ACHN (cell line): ENCODE measurements at regions of chr1 and their contacts with region 1.

Region 1: DNA sequence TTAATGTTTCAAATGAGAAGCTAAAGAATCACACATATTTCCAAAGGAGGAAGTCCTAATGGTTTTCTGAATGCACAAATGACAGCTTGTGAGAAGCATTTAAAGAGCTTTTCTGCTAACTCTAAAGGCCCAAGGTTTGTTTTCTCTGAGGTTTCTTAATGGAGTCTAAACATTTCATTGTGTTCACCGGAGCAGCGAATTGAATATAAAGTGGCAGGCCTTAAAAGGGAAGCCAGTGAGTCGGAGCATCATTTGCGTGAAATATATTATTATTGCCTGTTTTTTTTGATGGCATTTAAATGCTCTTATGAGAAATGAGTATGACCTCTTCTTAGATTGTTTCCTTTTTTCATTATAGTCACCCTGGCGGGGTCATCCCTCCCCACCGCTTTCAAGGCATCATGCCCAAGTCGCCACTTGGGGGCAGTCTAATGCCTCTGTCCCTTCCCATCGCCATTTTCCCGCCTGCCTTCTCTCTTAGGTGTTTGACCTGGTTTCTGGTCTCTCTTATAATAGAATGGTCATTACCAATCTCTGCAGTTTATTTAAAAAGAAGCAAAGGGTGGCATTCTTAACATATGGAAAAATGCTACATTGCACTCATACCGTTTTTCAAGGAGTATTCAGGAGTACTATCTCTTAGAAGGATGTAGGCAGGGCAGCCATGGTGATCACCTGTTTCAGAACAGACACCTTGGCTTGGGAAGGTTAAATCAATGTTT is 25.3 kb upstream of the OVAAL start:
- DNase-seq: peak; percentile 76

Region 2: DNA sequence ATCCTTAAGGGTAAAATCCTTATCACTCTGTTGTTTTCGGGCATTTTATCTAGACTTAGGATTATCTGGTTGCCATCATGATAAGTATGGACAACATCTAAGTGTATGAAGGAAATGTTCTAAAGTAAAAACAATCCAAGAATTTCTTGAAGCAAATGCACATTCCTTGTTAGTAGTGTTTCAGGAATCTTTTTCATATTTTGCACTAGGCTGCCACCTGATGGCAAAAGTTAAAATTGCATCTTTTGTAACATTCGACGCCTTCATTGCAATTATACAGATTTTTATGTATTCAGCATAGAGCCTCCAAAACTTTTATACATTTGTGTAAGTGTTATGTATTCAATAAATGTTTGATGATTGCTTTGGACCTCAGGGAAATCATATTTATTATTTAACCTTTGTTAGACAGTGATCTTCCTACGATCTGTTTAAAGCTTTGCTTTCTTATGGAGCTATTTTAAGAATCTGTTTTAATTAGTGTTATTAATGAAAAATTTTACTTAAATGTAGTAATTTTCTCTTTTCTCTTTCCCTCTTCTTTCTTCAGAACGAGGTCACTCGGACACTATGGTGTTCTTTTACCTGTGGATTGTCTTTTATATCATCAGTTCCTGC is 329.8 kb after region 1 on chr1:
- in situ Hi-C with region 1: loop called (anchors 25 kb)
- DNase-seq: peak; percentile 69